A549 (cell line): ENCODE measurements at regions of chr4 and their contacts with region 1.

Region 1: GRCh38 chr4:75995727-75996126 is 5.0 kb upstream of the SDAD1 start:
- DNase-seq: peak in 1 of 2 experiments; percentile 44
- ATAC-seq: peak in 1 of 2 experiments; percentile 36; a peak in 2 of 6 replicates
- H3K4me3 ChIP-seq: no peak overlapping the region
- H3K27ac ChIP-seq: peak overlapping the region; percentile 32 to 72; a peak in 4 of 6 replicates
- H3K4me1 ChIP-seq: no peaks in the 10 kb centered on the region
- CTCF ChIP-seq: peak; percentile 70
- EP300 ChIP-seq: no peak
- POLR2A ChIP-seq: no peak
- RAD21 ChIP-seq: peak; percentile 64 to 67

Region 2: GRCh38 chr4:76061982-76062381 is 66.3 kb after region 1 on chr4:
- CTCF ChIA-PET with region 1: interaction called, 28 read pairs
- POLR2A ChIA-PET with region 1: no interaction called
- DNase-seq: no peak
- ATAC-seq: no peak
- H3K4me3 ChIP-seq: no peak overlapping the region
- H3K27ac ChIP-seq: no peak overlapping the region
- H3K4me1 ChIP-seq: no peaks in the 10 kb centered on the region
- CTCF ChIP-seq: no peak
- EP300 ChIP-seq: no peak
- POLR2A ChIP-seq: no peak
- RAD21 ChIP-seq: no peak

Region 3: GRCh38 chr4:76067652-76068286 is 72.0 kb after region 1 on chr4:
- CTCF ChIA-PET with region 1: interaction called, 28 read pairs
- POLR2A ChIA-PET with region 1: no interaction called
- DNase-seq: peak; percentile 52 to 61
- ATAC-seq: peak; percentile 88 to 92; a peak in 5 of 6 replicates
- H3K4me3 ChIP-seq: no peak overlapping the region
- H3K27ac ChIP-seq: no peak overlapping the region
- H3K4me1 ChIP-seq: no peaks in the 10 kb centered on the region
- CTCF ChIP-seq: peak; percentile 76
- EP300 ChIP-seq: no peak
- POLR2A ChIP-seq: no peak
- RAD21 ChIP-seq: peak; percentile 76 to 80

Region 4: GRCh38 chr4:76087007-76087769 is 91.5 kb after region 1 on chr4:
- CTCF ChIA-PET with region 1: interaction called, 18 read pairs
- POLR2A ChIA-PET with region 1: no interaction called
- DNase-seq: peak; percentile 56 to 64
- ATAC-seq: peak; percentile 97 to 98
- H3K4me3 ChIP-seq: 0 out of 3 replicates have a peak overlapping the region, but pooled peaks have one; percentile 20
- H3K27ac ChIP-seq: peak overlapping the region in 1 of 2 experiments; percentile 48; a peak in 1 of 6 replicates
- H3K4me1 ChIP-seq: no peaks in the 10 kb centered on the region
- CTCF ChIP-seq: peak; percentile 48
- EP300 ChIP-seq: no peak
- POLR2A ChIP-seq: no peak
- RAD21 ChIP-seq: peak; percentile 53 to 68

Region 5: DNA sequence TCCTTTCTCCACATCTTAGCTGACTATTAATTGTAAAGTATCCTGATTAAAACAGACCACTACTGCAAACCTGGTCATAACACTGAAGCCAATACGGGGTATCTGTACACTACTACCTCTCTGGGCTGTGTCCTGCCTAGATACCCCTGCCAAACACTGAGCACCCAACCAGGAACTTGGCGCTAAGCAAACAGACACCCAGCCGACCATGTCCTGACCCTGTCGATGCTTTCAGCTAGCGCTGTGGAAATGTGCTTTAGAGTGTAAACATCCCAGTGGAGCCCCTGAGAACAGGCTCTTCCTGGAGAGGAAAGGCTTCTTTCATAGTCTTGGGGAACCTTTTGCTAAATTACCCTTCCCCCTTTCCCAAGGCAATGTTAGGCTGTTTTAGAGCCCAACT is 1214.2 kb after region 1 on chr4:
- CTCF ChIA-PET with region 1: no interaction called
- POLR2A ChIA-PET with region 1: no interaction called
- DNase-seq: no peak
- ATAC-seq: no peak
- H3K4me3 ChIP-seq: no peak overlapping the region
- H3K27ac ChIP-seq: no peak overlapping the region
- H3K4me1 ChIP-seq: no peaks in the 10 kb centered on the region
- CTCF ChIP-seq: no peak
- EP300 ChIP-seq: no peak
- POLR2A ChIP-seq: no peak
- RAD21 ChIP-seq: no peak